HEK293 (cell line): ENCODE measurements at regions of chrX and their contacts with region 1.

Region 1: DNA sequence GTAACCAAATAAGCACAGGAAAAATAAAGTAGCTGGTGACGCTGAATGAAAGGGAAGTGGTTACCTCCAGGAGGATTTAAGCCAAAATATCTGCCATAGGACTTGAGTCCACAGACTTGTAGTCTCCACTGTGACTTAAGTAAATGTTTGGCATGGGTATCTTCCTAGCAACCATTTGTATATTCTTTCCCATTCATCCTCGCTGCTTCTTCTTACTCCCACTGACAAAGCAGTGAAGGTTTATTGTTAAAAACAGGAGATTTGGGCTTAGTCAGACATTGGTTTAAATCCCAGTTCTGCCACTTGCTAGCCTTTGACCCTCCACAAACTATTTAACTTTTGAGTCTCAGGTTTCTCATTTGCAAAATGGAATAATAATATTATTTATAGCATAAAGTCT is 22.3 kb downstream of the COL4A6 start:
- H3K4me3 ChIP-seq: no peak overlapping the region
- H3K27ac ChIP-seq: no peak overlapping the region
- H3K4me1 ChIP-seq: peaks cover 3% of the 10 kb centered on the region; the same call in 1 of the 2 replicates
- CTCF ChIP-seq: no peak

Region 2: GRCh38 chrX:108380222-108380621 is 35.7 kb before region 1 on chrX:
- CTCF ChIA-PET with region 1: no interaction called
- POLR2A ChIA-PET with region 1: no interaction called
- H3K4me3 ChIP-seq: no peak overlapping the region
- H3K27ac ChIP-seq: no peak overlapping the region
- H3K4me1 ChIP-seq: peaks cover 8% of the 10 kb centered on the region; the same call in 1 of the 2 replicates
- CTCF ChIP-seq: no peak

Region 3: DNA sequence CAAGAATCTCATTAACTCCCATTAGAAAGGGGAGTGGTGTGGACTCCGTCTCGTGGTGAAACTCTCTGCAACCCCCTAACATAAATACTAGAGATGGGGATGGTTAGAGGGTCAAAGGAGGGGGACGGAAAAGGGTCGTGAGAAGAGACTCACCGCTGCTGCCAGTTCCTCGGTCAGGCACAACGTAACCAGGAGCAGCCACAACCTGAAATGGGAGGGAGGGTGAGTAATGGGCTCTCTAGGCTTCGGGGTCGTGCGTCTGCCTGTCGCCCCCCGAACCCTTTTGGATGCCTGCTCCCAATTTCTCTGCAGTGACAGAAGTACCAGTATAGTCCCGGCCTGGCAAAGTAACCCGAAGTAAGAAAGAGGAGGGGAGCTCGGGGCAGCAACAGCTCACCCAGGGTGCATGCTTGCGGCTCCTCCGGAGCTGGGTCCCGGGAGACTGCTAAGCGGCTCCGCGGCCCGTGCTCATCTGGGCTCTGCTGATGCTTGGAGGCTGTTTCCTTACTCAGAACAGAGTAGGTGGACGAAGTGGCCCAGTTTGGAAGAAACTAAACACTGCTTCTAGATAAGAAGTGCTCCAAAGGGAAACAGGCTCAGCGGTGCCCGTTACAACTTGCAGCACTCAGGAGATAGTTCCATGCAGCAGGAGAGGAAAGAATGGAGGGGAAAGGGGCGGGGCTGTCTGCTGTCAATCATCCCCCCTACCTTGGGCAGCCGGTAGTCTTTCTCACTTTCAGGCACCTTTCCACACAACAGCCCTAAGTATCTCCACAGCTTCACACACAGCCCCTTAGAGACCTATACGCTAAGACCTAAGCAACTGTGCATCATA is 22.1 kb after region 1 on chrX and contains the start of gene COL4A6:
- CTCF ChIA-PET with region 1: interaction called, 11 read pairs
- POLR2A ChIA-PET with region 1: no interaction called
- H3K4me3 ChIP-seq: peak within 1 kb of the TSS; percentile 54
- H3K27ac ChIP-seq: no peak within 1 kb of the TSS; the same call in none of the 2 replicates
- H3K4me1 ChIP-seq: peaks cover 4% of the 10 kb centered on the region; the same call in 1 of the 2 replicates
- CTCF ChIP-seq: no peak